AG04449 (cell line): ENCODE measurements at regions of chr3 and their contacts with region 1.

Region 1: DNA sequence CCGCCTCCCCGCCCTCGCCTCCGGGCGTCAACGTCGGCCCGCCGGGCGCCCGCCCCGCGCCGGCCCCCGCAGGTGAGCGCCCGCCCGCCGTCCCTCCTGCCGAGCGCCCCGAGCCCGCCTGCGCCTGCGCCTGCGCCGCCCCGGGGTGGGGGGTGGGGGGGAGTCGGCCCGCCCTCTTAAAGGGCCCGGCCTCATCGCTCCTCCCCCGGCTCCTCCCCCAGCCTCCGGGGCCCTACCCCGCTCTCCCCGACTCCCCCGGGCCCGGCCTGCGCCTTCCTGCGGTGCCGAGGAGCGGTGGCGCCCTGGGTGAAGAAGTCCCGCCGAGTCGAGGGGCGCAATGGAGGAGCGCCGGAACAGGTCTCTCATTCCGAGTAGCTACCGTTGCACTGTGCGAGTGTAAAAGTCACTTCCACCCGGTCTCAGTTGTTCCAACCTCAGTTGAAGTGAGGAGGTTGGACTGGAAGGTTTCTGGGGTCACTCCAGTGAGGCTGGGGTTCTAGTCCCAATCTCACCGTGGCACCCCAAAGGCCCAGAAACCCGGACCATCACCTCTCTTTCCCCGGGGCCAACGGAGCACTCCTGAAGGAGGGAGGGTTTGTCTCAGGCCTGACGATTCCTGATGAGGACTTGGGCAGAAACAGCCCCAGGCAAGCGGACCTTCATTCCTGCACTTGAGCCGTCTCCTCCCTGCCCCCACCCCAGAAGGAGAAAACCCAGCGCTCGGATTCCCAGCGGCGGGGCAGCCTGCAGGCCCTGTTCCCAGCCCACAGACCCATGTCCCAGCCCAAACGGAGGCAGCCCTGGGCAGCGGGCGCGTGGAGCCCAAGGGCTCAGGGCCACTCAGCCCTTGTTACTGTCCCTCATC is 1.5 kb upstream of the TNK2 start:
- DNase-seq: no peak
- H3K4me3 ChIP-seq: peak overlapping the region; percentile 59
- CTCF ChIP-seq: no peak

Region 2: DNA sequence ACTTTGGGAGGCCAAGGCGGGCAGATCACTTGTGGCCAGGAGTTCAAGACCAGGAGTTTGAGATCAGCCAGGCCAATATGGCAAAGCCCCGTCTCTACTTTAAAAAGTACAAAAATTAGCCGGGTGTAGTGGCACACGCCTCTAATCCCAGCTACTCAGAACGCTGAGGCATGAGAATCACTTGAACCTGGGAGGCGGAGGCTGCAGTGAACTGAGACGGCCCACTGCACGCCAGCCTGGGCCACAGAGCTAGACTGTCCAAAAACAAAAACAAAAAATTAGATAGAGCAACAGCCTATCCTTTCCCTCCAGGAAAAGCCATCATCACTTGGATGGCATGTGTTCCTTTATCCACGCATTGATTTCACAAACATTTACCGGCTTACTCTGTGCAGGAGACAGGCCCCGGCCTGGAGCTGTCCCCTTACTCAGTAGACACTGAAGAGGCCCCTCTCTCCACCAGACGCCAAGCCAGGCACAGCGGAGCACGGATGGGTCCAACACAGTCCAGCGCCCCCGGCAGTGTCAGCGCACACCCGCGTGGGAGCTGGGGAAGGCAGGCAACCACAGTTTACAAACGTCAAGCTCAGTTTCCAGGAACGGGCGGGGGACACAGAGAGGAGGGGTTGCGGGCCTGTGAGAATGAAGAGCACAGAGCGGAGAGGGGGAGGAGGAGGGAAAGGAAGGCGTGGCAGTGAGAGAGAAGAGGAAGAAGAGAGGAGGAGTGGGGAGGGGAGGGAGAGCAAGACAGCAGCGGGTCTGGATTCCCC is 1513.9 kb before region 1 on chr3:
- CTCF ChIA-PET with region 1: no interaction called
- POLR2A ChIA-PET with region 1: no interaction called
- DNase-seq: no peak
- H3K4me3 ChIP-seq: no peak overlapping the region
- CTCF ChIP-seq: no peak

Region 3: DNA sequence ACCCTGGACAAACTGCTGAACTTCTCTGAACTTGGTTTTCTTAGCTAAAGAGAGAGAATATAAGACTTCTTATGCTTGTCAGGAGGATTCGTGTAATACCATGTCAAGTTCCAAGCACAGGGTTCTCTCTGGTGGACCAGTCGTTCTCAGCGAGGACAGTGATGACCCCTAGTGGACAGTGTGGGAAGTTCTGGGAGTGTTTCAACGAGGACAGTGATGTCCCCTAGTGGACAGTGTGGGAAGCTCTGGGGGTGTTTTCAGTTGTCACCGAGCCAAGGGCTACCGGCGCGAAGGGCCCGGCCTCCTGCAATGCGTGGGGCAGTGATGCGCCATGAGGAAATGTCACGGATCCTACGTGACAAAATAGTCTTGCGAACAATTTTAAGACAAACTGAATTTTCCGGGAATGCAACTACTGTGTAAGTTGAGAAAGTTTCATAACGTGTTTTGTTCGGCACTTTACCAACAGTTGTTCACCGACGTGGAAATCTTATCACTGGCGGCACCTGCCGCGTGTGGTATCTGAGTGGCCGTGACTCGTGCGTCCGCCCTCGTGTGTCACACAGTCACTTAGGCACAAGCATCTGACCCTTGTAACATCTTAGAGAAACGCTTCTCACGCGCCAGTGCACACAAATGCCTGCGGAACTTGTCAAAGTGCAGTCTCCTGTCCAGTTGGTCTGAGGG is 58.9 kb before region 1 on chr3:
- CTCF ChIA-PET with region 1: interaction called, 131 read pairs
- POLR2A ChIA-PET with region 1: no interaction called
- DNase-seq: peak; percentile 46
- H3K4me3 ChIP-seq: no peak overlapping the region
- CTCF ChIP-seq: peak; percentile 100

Region 4: GRCh38 chr3:195863121-195864006 is 46.5 kb before region 1 on chr3:
- CTCF ChIA-PET with region 1: interaction called, 131 read pairs
- POLR2A ChIA-PET with region 1: no interaction called
- DNase-seq: peak; percentile 40
- H3K4me3 ChIP-seq: no peak overlapping the region
- CTCF ChIP-seq: peak; percentile 99

Region 5: GRCh38 chr3:195894780-195895607 is 14.9 kb before region 1 on chr3:
- CTCF ChIA-PET with region 1: interaction called, 137 read pairs
- POLR2A ChIA-PET with region 1: interaction called, 4 read pairs
- DNase-seq: no peak
- H3K4me3 ChIP-seq: peak overlapping the region; percentile 78
- CTCF ChIP-seq: peak; percentile 97

Region 6: DNA sequence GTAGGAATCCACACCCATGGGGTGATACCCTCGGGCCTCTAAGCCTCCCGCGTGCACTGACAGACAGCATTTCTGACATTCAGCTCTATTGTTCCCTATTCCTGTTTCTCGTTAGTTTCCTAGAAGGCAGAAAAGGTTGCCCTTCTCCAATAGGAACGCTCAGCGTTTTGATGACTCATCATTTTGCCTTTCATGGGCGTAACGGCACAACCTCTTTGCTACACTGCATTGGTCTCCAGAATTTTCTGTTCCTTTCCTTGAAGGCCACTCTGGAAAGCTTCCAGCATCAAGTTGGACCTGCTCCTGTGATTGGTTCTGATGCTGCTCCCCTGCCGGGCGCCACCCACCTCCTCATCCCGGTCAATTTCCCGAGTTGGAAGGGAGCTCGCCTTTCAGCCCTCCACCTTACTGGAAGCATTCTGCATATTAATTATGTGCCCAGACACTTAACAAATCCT is 11.5 kb after region 1 on chr3:
- CTCF ChIA-PET with region 1: interaction called, 51 read pairs
- POLR2A ChIA-PET with region 1: no interaction called
- DNase-seq: no peak
- H3K4me3 ChIP-seq: no peak overlapping the region
- CTCF ChIP-seq: no peak

Region 7: GRCh38 chr3:195932456-195933430 is 22.9 kb after region 1 on chr3:
- CTCF ChIA-PET with region 1: interaction called, 51 read pairs
- POLR2A ChIA-PET with region 1: interaction called, 4 read pairs
- DNase-seq: no peak
- H3K4me3 ChIP-seq: no peak overlapping the region
- CTCF ChIP-seq: no peak

Region 8: GRCh38 chr3:195999896-196000295 is 90.0 kb after region 1 on chr3:
- CTCF ChIA-PET with region 1: no interaction called
- POLR2A ChIA-PET with region 1: no interaction called
- DNase-seq: no peak
- H3K4me3 ChIP-seq: no peak overlapping the region
- CTCF ChIP-seq: no peak

Region 9: DNA sequence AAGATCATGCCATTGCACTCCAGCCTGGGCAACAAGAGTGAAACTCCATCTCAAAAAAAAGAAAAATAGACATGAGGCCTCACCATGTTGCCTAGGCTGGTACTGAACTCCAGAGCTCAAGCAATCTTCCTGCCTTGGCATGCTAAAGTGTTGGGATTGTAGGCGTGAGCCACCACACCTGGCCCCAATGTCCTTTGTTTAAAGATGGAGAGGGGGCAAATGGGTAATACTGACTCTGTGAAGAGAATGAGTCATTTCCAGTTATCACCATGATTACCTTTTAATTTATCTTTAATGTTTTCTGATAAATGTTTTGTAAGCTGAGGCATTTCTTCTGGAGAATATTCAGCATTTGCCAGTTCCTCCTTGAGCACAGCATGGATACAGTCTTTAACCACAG is 405.9 kb after region 1 on chr3:
- CTCF ChIA-PET with region 1: no interaction called
- POLR2A ChIA-PET with region 1: no interaction called
- DNase-seq: no peak
- H3K4me3 ChIP-seq: no peak overlapping the region
- CTCF ChIP-seq: no peak